ENCODE measurements at regions of chr7 and their contacts with region 1.

Region 1: DNA sequence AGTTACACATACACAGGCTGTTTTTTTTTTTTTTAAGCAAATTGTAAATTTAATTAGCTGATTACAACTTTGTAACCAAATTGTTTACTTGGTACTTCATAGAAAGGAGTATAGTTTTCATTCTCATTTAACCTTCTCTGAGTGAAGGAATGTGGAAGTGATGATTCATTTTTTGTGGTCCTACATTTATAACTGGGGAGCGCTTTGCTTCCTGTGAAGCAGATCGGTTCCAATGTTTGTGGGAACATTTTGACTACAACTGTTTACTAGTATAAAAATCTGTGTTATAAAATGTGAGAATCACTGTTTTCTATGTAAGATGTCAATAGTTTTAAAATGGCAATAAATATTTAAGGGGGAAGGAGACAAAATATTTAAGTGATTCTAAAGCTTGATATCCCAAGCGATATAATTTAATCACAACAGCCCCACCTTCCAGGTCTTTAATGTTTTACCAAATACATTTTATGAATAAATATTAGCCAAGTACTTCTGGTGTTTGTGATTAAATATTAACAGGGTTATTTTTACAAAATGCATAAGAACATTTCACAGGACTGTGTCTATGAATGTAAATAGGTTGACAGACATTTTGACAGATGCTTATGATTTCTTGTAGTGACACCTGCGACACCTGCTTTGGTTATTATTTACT is 57.1 kb downstream of the NXPH1 start:
- DNase-seq: no peak
- H3K4me3 ChIP-seq: no peak overlapping the region
- H3K27ac ChIP-seq: no peak overlapping the region
- H3K4me1 ChIP-seq: no peaks in the 10 kb centered on the region
- H3K27me3 ChIP-seq: no peaks in the 10 kb centered on the region
- CTCF ChIP-seq: no peak
- EP300 ChIP-seq: no peak
- RAD21 ChIP-seq: no peak

Region 2: DNA sequence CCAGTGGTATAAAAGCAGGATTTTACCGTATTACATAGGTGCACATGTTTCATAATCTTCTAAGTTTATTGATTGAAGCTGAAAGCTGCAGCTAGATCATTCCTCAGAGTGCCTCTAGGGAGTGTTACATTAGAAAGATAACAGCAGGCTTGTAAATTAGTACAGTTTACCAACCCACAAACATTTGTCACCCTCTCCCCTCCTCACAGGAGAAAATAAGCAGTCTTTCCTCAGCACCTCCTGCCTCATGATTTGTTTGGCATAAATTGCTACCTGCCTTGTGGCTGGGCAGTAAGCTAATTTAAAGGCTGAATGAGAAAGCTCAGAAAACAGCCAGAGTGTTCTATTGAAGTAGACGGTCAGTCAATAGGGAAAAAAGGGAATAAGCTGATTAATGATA is 17.0 kb after region 1 on chr7:
- CTCF ChIA-PET with region 1: interaction called, 13 read pairs
- POLR2A ChIA-PET with region 1: no interaction called
- DNase-seq: no peak
- H3K4me3 ChIP-seq: no peak overlapping the region
- H3K27ac ChIP-seq: no peak overlapping the region
- H3K4me1 ChIP-seq: peaks cover 0 to 21% of the 10 kb centered on the region in 2 experiments; a peak in 2 of 4 replicates
- H3K27me3 ChIP-seq: no peaks in the 10 kb centered on the region
- CTCF ChIP-seq: no peak
- EP300 ChIP-seq: no peak
- RAD21 ChIP-seq: no peak

Region 3: GRCh38 chr7:8615019-8615418 is 124.5 kb after region 1 on chr7:
- CTCF ChIA-PET with region 1: no interaction called
- POLR2A ChIA-PET with region 1: no interaction called
- DNase-seq: no peak
- H3K4me3 ChIP-seq: no peak overlapping the region
- H3K27ac ChIP-seq: no peak overlapping the region
- H3K4me1 ChIP-seq: peaks cover 0 to 3% of the 10 kb centered on the region in 2 experiments; a peak in 1 of 4 replicates
- H3K27me3 ChIP-seq: no peaks in the 10 kb centered on the region
- CTCF ChIP-seq: no peak
- EP300 ChIP-seq: no peak
- RAD21 ChIP-seq: no peak

Measured in SK-N-SH (cell line).